Activated T-helper 1 cell treated with anti-CD3 and anti-CD28 coated beads, Interleukin-12 subunit alpha, Interleukin-12 subunit beta, Interleukin-2, Interleukin-4 antibody, amounts not matched to agents 30 ng/mL and 10 ng/mL and 1 ng/mL, durations not matched to agents 14 hours and 24 hours and 36 hours (primary cell): ENCODE measurements at regions of chr15 and their contacts with region 1.

Region 1: GRCh38 chr15:52679232-52680040 is at the start of gene ATOSA:
- DNase-seq: peak; percentile 91
- H3K4me3 Mint-ChIP-seq: peak within 1 kb of the TSS; percentile 91
- H3K27ac Mint-ChIP-seq: peak within 1 kb of the TSS; percentile 100
- H3K4me1 Mint-ChIP-seq: peaks cover 38% of the 10 kb centered on the region
- H3K27me3 Mint-ChIP-seq: no peaks in the 10 kb centered on the region
- total RNA-seq, gene ATOSA: 14.8 and 16.5 TPM in 2 replicates

Region 2: DNA sequence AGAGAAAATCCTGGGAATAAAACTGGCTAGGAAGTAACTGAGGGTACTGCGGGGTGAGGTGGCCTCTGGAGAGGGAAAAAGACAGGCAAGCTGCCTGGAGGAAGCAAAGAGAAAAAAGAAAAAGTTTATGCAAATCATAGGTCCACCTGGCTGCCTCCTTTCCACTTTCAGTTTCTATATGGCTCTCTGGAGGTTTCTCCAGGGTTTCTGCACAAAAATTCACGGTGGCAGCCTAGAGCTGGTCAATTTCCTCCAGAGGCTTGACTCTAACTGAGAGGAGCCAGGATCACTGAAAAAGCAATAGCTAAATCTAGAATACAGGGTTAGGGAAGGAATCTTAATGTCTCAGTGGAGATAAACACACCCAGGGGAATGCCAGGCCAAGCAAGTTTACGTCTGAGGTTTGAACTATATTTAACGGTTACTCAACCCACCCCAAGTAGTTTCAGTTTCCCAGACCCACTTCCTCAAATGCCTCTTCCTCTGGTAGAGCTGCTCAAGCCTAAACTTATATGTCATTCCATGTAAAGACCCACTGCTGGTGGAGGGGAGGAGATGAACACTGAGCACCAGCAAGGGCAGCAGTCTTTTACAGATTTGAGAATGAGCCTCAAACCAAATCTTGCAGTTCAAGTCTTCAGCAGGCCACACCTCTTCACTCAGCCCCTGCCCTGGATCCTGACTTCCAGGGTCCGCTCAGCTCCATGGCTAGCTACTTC is 947.7 kb before region 1 on chr15:
- intact Hi-C with region 1: loop called (anchors 2 kb)
- DNase-seq: peak; percentile 40
- H3K4me3 Mint-ChIP-seq: peak overlapping the region; percentile 72
- H3K27ac Mint-ChIP-seq: peak overlapping the region; percentile 85
- H3K4me1 Mint-ChIP-seq: peaks cover 68% of the 10 kb centered on the region
- H3K27me3 Mint-ChIP-seq: peaks cover 2% of the 10 kb centered on the region

Region 3: GRCh38 chr15:52256366-52256765 is 423.1 kb before region 1 on chr15:
- intact Hi-C with region 1: loop called (anchors 2 kb)
- DNase-seq: peak; percentile 62
- H3K4me3 Mint-ChIP-seq: peak overlapping the region; percentile 47
- H3K27ac Mint-ChIP-seq: peak overlapping the region; percentile 82
- H3K4me1 Mint-ChIP-seq: peaks cover 28% of the 10 kb centered on the region
- H3K27me3 Mint-ChIP-seq: no peaks in the 10 kb centered on the region

Region 4: DNA sequence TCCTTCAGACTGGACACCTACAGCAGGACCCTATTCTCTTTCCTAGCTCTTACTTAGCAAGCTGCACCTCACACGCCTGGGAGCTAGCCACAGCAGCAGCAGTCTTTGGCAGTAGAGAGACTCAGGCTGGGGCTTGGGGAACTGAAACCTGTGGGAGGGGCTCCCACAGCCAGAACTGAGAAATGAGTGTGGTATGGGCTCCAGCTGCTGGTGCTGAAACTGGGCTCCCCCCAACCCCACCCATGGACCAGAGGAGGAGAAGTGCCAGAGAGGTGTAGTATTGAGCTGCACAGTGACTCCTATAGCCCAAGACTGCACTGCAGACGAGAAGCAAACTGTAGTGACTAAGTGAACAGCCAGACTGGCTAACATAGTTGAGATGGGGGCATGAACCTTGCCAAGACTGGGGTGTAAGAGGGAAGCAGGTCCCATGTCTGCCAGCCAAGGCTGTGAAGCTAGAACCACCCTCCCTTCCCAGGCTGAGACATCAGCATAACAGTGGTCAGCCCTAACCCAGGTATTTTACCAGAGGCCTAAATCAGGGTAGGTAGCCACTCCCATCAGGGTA is 213.2 kb before region 1 on chr15:
- intact Hi-C with region 1: loop called (anchors 5 kb)
- DNase-seq: peak; percentile 44
- H3K4me3 Mint-ChIP-seq: no peak overlapping the region
- H3K27ac Mint-ChIP-seq: no peak overlapping the region
- H3K4me1 Mint-ChIP-seq: peaks cover 52% of the 10 kb centered on the region
- H3K27me3 Mint-ChIP-seq: no peaks in the 10 kb centered on the region

Region 5: DNA sequence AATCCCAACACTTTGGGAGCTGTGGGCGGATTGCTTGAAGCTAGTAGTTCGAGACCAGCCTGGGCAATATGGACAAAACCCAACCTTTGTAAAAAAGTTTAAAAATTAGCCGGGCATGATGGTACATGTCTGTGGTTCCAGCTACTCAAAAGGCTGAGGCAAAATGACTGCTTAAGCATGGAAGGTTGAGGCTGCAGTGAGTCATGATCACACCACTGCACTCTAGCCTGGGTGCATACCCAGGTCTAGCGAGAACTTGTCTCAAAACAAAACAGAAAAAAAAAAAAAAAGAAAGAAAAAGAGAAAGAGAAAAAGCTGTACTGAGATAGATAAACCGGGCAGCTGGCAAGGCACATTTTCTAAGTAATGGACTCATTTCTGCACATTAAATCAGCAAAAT is 121.2 kb before region 1 on chr15:
- intact Hi-C with region 1: loop called (anchors 1 kb)
- DNase-seq: peak; percentile 61
- H3K4me3 Mint-ChIP-seq: peak overlapping the region; percentile 64
- H3K27ac Mint-ChIP-seq: peak overlapping the region; percentile 87
- H3K4me1 Mint-ChIP-seq: peaks cover 72% of the 10 kb centered on the region
- H3K27me3 Mint-ChIP-seq: no peaks in the 10 kb centered on the region

Region 6: DNA sequence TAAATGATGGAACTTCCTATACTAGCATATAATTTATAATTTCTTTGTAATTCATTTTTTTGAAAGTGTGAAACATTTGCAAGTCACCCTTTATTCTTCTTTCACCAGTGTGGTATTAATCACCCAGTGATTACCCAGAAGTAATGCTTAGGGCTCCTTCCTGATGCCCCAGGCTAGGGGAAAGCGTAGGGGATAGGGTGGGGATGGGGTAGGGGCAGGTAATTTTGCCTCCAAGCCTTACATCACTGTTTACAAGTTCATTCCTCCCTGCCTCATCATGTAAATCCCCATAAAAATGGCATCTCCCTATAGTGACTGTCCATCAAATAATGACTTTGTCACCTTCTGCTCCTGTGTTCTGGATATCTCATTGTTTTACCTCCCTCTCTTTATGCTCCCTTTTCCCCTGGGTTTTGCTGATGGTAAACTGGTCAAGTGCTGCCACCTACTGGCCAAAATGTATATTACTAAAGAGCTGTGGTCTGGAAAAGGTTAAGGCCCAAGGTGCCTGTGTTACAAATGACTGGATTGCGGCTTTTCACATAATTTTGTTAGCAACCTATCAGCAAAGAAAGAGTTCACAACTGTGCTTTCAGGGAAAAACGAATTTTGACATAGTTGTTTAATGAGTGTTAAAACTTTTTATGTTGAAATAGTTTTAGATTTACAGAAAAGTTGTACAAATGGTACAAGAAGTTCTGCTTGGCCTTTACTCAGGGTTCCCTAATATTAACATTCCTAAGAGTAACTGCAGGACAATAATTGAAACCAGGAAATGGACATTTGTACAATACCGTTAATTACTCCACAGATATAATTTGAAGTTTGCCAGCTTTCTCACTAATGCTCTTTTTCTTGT is 56.0 kb after region 1 on chr15:
- intact Hi-C with region 1: loop called (anchors 2 kb)
- DNase-seq: peak; percentile 68
- H3K4me3 Mint-ChIP-seq: no peak overlapping the region
- H3K27ac Mint-ChIP-seq: no peak overlapping the region
- H3K4me1 Mint-ChIP-seq: peaks cover 30% of the 10 kb centered on the region
- H3K27me3 Mint-ChIP-seq: peaks cover 8% of the 10 kb centered on the region

Region 7: DNA sequence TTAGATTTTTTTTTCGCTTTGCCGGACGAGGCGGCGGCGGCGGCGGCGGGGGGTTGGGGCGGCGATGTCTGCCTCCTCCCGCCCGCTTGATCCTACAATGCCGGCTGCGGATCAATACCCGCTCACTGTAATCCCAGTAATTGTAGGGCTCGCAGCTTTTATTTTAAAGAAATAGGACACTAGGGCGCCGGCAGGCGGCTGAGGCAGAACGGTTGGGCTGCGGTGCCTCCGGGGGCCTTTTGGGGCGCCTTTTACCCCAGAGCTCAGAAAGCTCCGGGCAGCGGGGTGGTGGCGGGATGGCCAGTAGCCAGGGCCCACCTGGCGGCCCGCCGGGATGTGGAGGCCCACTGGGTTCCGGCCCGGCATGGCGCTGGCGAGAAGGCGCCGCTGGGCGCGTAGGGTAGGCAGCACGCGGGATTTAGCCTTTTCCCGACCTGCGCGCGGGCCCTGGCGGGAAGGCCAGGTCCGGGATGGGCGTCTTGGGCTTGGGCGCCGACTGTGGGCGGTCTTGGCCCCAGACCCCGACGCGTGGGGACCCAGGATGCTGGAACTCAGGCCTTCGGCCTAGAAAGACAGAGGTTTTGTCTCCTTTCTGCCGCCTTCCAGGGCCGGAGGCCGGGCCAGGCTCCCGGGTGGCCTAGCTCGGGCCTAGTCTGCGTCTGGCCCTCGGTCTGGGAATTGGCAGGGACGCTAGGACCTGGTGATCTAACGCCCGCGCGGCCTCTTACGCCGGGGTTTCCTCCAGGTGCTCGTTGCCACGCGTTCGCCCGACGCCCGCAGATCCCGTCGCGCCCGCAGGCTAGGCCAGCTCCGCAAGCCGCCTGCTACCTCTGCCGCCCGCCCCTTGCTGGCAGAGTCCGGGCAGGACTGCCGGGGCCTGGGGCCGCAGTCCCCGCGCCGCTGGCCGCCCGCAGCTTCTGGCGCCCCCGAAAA is 126.2 kb after region 1 on chr15:
- intact Hi-C with region 1: no loop called
- DNase-seq: no peak
- H3K4me3 Mint-ChIP-seq: peak overlapping the region; percentile 37
- H3K27ac Mint-ChIP-seq: no peak overlapping the region
- H3K4me1 Mint-ChIP-seq: peaks cover 13% of the 10 kb centered on the region
- H3K27me3 Mint-ChIP-seq: peaks cover 80% of the 10 kb centered on the region